ENCODE measurements at regions of chr3 and their contacts with region 1.

Region 1: DNA sequence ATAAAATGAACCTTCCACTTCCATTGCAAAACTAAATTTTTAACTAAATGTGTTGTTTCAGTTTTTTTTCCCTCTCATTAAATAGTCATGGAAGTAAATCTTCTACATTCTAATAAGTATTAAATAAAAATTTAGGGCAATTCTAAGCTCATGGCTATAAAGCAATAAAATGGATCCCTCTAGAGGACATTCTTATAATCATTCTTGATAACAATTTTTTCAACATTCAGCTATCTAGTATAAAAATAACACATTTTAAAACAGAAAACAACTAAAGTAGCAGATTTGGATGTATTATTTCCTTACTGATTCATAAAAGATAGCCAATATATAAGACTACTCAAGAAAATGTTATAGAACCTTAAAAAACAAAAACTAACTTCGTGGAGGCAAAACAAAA is 393.1 kb downstream of the PLOD2 start:
- DNase-seq: no peak
- ATAC-seq: no peak
- H3K4me3 ChIP-seq: no peak overlapping the region
- H3K27ac ChIP-seq: no peak overlapping the region
- H3K4me1 ChIP-seq: no peaks in the 10 kb centered on the region
- H3K27me3 ChIP-seq: no peaks in the 10 kb centered on the region
- CTCF ChIP-seq: peak in 2 of 3 experiments; percentile 24 to 47; a peak in 4 of 6 replicates
- POLR2A ChIP-seq: no peak
- RAD21 ChIP-seq: peak; percentile 58

Region 2: GRCh38 chr3:143775459-143775858 is 1992.5 kb before region 1 on chr3:
- CTCF ChIA-PET with region 1: interaction called, 3 read pairs
- POLR2A ChIA-PET with region 1: no interaction called
- RAD21 ChIA-PET with region 1: no interaction called
- intact Hi-C with region 1: loop called (anchors 5 kb)
- DNase-seq: peak; percentile 21
- ATAC-seq: peak; percentile 90
- H3K4me3 ChIP-seq: no peak overlapping the region
- H3K27ac ChIP-seq: no peak overlapping the region
- H3K4me1 ChIP-seq: no peaks in the 10 kb centered on the region
- H3K27me3 ChIP-seq: 0 out of 2 replicates have a peak, but pooled peaks cover 5% of the 10 kb centered on the region
- CTCF ChIP-seq: peak; percentile 25 to 60 (median 41); a peak in 4 of 6 replicates
- POLR2A ChIP-seq: no peak
- RAD21 ChIP-seq: peak; percentile 74

Region 3: DNA sequence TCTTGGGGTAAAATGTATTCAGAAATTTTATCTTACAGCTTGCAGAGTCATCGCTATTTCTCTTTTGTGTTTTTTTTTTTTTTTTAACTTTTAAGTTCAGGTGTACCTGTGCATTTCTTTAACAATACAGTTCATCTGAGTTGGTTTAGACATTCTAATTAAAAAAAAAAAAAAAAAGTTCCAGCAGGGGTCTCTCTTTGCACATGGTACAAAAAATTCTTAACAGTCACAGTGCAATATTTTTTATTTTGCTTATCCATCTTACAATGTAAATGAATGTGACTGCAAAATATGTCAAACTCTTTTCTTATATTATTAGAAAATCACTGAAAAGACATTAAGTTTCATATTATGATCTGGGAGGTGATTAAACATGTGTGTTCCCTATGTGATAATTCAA is 1872.1 kb before region 1 on chr3:
- CTCF ChIA-PET with region 1: interaction called, 4 read pairs
- POLR2A ChIA-PET with region 1: no interaction called
- RAD21 ChIA-PET with region 1: no interaction called
- intact Hi-C with region 1: loop called (anchors 5 kb)
- DNase-seq: no peak
- ATAC-seq: 0 out of 2 replicates have a peak, but pooled peaks have one; percentile 30
- H3K4me3 ChIP-seq: no peak overlapping the region
- H3K27ac ChIP-seq: no peak overlapping the region
- H3K4me1 ChIP-seq: no peaks in the 10 kb centered on the region
- H3K27me3 ChIP-seq: no peaks in the 10 kb centered on the region
- CTCF ChIP-seq: peak in 2 of 3 experiments; percentile 28 to 39; a peak in 3 of 6 replicates
- POLR2A ChIP-seq: no peak
- RAD21 ChIP-seq: peak; percentile 56

Region 4: DNA sequence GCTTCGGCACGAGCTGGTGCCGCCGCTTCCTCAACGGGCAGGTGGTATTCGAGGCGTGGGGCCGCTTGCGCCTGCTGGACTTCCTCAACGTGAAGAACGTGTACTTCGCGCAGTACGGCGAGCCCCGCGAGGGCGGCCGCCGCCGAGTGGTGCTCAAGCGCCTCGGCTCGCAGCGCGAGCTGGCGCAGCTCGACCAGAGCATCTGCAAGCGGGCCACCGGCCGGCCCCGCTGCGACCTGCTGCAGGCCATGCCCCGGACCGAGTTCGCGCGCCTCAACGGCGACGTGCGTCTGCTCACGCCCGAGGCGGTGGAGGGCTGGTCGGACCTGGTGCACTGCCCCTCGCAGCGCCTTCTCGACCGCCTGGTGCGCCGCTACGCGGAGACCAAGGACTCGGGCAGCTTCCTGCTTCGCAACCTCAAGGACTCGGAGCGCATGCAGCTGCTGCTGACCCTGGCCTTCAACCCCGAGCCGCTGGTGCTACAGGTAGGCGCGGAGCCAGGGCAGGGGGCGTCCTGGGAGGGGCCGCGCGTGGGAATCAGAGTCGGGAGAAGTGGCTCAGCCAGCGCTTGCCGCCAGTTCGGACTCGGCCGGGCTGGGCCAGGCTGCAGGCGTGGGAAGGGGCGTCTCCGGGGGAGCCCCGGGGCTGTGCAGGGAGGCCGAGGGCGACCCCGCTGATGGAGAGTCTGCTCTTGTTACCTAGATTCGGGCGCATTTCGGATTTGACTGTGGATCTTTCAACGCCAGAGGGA is 1795.2 kb before region 1 on chr3:
- CTCF ChIA-PET with region 1: interaction called, 11 read pairs
- POLR2A ChIA-PET with region 1: interaction called, 6 read pairs
- RAD21 ChIA-PET with region 1: interaction called in 1 of 2 experiments, 3 read pairs
- intact Hi-C with region 1: loop called (anchors 10 kb)
- DNase-seq: peak; percentile 15
- ATAC-seq: peak; percentile 28
- H3K4me3 ChIP-seq: peak overlapping the region; percentile 82 to 91
- H3K27ac ChIP-seq: peak overlapping the region; percentile 90
- H3K4me1 ChIP-seq: peaks cover 7 to 17% of the 10 kb centered on the region in 2 experiments; a peak in 3 of 4 replicates
- H3K27me3 ChIP-seq: no peaks in the 10 kb centered on the region
- CTCF ChIP-seq: peak; percentile 27 to 43 (median 37); a peak in 2 of 6 replicates
- POLR2A ChIP-seq: no peak
- RAD21 ChIP-seq: no peak

Region 5: DNA sequence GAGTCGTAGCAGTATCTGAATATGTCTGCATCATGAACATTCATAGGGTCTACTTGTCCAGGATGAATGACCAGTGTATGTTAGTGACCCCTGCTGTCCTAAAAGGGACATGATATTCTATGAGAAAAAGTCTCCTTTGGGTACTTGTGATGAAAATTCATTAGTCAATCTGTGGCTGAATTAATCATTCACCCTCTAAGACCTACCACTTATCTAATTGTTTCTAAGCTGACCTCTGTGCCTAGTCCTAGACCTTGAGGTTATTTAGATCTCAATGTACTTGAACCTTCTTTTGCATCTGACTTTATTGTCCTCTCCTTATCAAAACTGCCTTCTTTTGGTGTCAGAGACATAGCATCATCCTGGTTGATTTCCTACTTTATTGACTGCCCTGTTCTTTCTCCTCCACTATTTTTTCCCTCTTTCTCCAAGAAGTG is 997.0 kb before region 1 on chr3:
- CTCF ChIA-PET with region 1: interaction called, 3 read pairs
- POLR2A ChIA-PET with region 1: no interaction called
- RAD21 ChIA-PET with region 1: no interaction called
- intact Hi-C with region 1: loop called (anchors 5 kb)
- DNase-seq: peak; percentile 24
- ATAC-seq: peak; percentile 72
- H3K4me3 ChIP-seq: no peak overlapping the region
- H3K27ac ChIP-seq: no peak overlapping the region
- H3K4me1 ChIP-seq: no peaks in the 10 kb centered on the region
- H3K27me3 ChIP-seq: no peaks in the 10 kb centered on the region
- CTCF ChIP-seq: peak; percentile 24 to 48 (median 36); a peak in 4 of 6 replicates
- POLR2A ChIP-seq: no peak
- RAD21 ChIP-seq: peak; percentile 65

Region 6: GRCh38 chr3:145704020-145704419 is 63.9 kb before region 1 on chr3:
- CTCF ChIA-PET with region 1: no interaction called
- POLR2A ChIA-PET with region 1: no interaction called
- RAD21 ChIA-PET with region 1: no interaction called
- intact Hi-C with region 1: no loop called
- DNase-seq: no peak
- ATAC-seq: no peak
- H3K4me3 ChIP-seq: no peak overlapping the region
- H3K27ac ChIP-seq: no peak overlapping the region
- H3K4me1 ChIP-seq: no peaks in the 10 kb centered on the region
- H3K27me3 ChIP-seq: no peaks in the 10 kb centered on the region
- CTCF ChIP-seq: no peak
- POLR2A ChIP-seq: no peak
- RAD21 ChIP-seq: no peak